GM12878 (cell line): ENCODE measurements at regions of chr10 and their contacts with region 1.

Region 1: GRCh38 chr10:62816331-62817120 is at the start of gene EGR2:
- DNase-seq: peak; percentile 92
- ATAC-seq: peak; percentile 78
- H3K4me3 ChIP-seq: peak within 1 kb of the TSS; percentile 72
- H3K27ac ChIP-seq: peak within 1 kb of the TSS; percentile 72
- H3K4me1 ChIP-seq: peaks cover 19% of the 10 kb centered on the region
- H3K27me3 ChIP-seq: peaks cover 1 to 8% of the 10 kb centered on the region in 2 experiments; a peak in 3 of 4 replicates
- CTCF ChIP-seq: no peak
- EP300 ChIP-seq: peak in 1 of 2 experiments; percentile 56; a peak in 3 of 4 replicates
- POLR2A ChIP-seq: peak; percentile 44
- RAD21 ChIP-seq: no peak
- polyA plus RNA-seq, gene EGR2: 8.3 to 14.0 TPM

Region 2: GRCh38 chr10:62456611-62457101 is 359.9 kb before region 1 on chr10:
- CTCF ChIA-PET with region 1: interaction called, 3 read pairs
- POLR2A ChIA-PET with region 1: no interaction called
- RAD21 ChIA-PET with region 1: interaction called, 17 read pairs
- SMC1A ChIA-PET with region 1: no interaction called
- in situ Hi-C with region 1: no loop called
- intact Hi-C with region 1: no loop called
- DNase-seq: peak; percentile 86
- ATAC-seq: peak; percentile 97
- H3K4me3 ChIP-seq: no peak overlapping the region
- H3K27ac ChIP-seq: no peak overlapping the region
- H3K4me1 ChIP-seq: peaks cover 21% of the 10 kb centered on the region
- H3K27me3 ChIP-seq: peaks cover 0 to 2% of the 10 kb centered on the region in 2 experiments; a peak in 1 of 4 replicates
- CTCF ChIP-seq: no peak
- EP300 ChIP-seq: peak; percentile 90 to 96
- POLR2A ChIP-seq: no peak
- RAD21 ChIP-seq: no peak

Region 3: GRCh38 chr10:62618576-62619412 is 197.7 kb before region 1 on chr10:
- CTCF ChIA-PET with region 1: interaction called, 123 read pairs
- POLR2A ChIA-PET with region 1: interaction called, 5 read pairs
- RAD21 ChIA-PET with region 1: interaction called, 132 read pairs
- SMC1A ChIA-PET with region 1: interaction called, 131 read pairs
- in situ Hi-C with region 1: loop called (anchors 5 kb)
- intact Hi-C with region 1: loop called (anchors 1 kb)
- DNase-seq: no peak
- ATAC-seq: peak; percentile 58
- H3K4me3 ChIP-seq: no peak overlapping the region
- H3K27ac ChIP-seq: 0 out of 2 replicates have a peak overlapping the region, but pooled peaks have one; percentile 2
- H3K4me1 ChIP-seq: peaks cover 30% of the 10 kb centered on the region
- H3K27me3 ChIP-seq: no peaks in the 10 kb centered on the region
- CTCF ChIP-seq: no peak
- EP300 ChIP-seq: no peak
- POLR2A ChIP-seq: no peak
- RAD21 ChIP-seq: no peak

Region 4: DNA sequence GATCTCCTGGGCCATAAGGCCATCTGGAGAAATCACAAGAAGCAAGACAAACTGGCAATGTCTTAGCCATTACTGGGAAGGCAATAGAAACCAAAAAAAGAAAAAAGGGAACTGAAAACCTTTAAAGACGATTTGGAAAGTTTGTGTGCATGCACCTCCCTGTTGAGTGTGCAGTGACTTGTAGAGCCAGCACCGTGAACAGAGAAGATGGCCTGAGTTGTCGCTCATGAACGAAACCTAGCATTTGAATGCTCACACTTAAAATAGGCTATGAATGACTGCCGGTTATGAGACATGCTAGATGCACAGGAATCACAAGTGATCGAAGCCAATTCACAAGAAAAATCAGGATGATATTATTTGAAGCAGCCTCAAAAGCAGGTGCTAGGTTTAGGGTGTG is 163.3 kb before region 1 on chr10:
- CTCF ChIA-PET with region 1: interaction called, 7 read pairs
- POLR2A ChIA-PET with region 1: interaction called, 15 read pairs
- RAD21 ChIA-PET with region 1: interaction called, 47 read pairs
- SMC1A ChIA-PET with region 1: interaction called, 37 read pairs
- in situ Hi-C with region 1: no loop called
- intact Hi-C with region 1: loop called (anchors 1 kb)
- DNase-seq: peak; percentile 97
- ATAC-seq: peak; percentile 85
- H3K4me3 ChIP-seq: no peak overlapping the region
- H3K27ac ChIP-seq: peak overlapping the region; percentile 90
- H3K4me1 ChIP-seq: peaks cover 50% of the 10 kb centered on the region
- H3K27me3 ChIP-seq: no peaks in the 10 kb centered on the region
- CTCF ChIP-seq: no peak
- EP300 ChIP-seq: peak; percentile 99
- POLR2A ChIP-seq: no peak
- RAD21 ChIP-seq: peak; percentile 45; the same call in 1 of the 2 replicates

Region 5: DNA sequence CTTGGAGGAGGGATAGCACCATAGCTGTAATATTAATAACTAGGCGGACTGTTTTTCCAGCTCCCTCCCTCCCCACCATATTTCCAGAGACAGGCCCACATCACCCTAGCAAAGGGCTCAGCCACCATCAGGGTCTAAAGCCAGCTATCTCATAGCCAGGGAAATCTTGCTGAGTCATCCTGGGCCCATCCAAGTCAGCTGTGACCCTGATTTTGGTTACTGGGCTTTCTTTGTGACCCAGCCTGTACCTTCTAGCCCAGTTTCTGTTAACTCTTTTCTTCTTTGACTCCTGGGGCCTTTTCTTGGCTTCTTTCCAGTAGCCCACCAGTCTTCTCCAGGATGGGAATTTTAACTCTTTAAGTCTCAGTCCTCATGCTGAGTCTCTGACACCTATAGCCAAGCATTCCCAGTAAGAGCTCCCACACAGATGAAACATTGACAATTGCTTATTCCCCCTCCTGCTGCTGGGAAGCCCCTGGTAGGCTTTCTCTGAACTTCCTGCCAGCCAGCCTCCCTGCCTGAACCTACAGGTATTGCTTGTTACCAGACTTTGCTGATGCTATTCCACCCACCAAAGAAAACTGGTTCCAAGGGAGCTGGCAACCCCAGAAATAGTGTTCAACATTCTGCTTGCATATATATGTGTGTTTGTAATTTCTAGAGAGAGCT is 46.8 kb before region 1 on chr10:
- CTCF ChIA-PET with region 1: interaction called, 5 read pairs
- POLR2A ChIA-PET with region 1: interaction called, 4 read pairs
- RAD21 ChIA-PET with region 1: interaction called, 5 read pairs
- SMC1A ChIA-PET with region 1: interaction called, 20 read pairs
- in situ Hi-C with region 1: no loop called
- intact Hi-C with region 1: no loop called
- DNase-seq: no peak
- ATAC-seq: peak; percentile 87
- H3K4me3 ChIP-seq: no peak overlapping the region
- H3K27ac ChIP-seq: peak overlapping the region; percentile 56
- H3K4me1 ChIP-seq: peaks cover 31% of the 10 kb centered on the region
- H3K27me3 ChIP-seq: no peaks in the 10 kb centered on the region
- CTCF ChIP-seq: no peak
- EP300 ChIP-seq: no peak
- POLR2A ChIP-seq: no peak
- RAD21 ChIP-seq: no peak

Region 6: DNA sequence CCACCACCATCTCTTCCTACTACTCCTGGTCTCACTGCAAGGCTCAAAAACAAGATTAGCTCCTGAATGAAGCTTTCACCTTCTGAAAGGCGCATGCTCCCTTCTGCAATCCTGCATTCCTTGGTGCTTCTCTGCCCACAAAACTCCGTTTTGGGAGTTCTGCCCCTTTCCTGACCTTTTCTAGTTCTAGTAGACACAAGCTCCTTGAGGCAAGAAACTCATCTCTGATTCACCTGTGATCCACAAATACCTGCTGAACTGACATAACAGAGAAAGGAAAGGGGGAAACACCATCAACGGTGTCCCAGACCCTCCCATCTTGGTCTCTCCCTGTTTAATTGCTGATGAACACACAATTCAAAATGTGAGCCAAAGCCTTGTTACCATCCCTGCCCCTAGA is 63.6 kb after region 1 on chr10:
- CTCF ChIA-PET with region 1: no interaction called
- POLR2A ChIA-PET with region 1: no interaction called
- RAD21 ChIA-PET with region 1: no interaction called
- SMC1A ChIA-PET with region 1: no interaction called
- in situ Hi-C with region 1: no loop called
- intact Hi-C with region 1: no loop called
- DNase-seq: no peak
- ATAC-seq: no peak
- H3K4me3 ChIP-seq: no peak overlapping the region
- H3K27ac ChIP-seq: no peak overlapping the region
- H3K4me1 ChIP-seq: no peaks in the 10 kb centered on the region
- H3K27me3 ChIP-seq: peaks cover 2 to 4% of the 10 kb centered on the region in 2 experiments; a peak in 3 of 4 replicates
- CTCF ChIP-seq: no peak
- EP300 ChIP-seq: no peak
- POLR2A ChIP-seq: no peak
- RAD21 ChIP-seq: no peak

Region 7: GRCh38 chr10:62992145-62992721 is 175.7 kb after region 1 on chr10:
- CTCF ChIA-PET with region 1: no interaction called
- POLR2A ChIA-PET with region 1: interaction called, 4 read pairs
- RAD21 ChIA-PET with region 1: interaction called, 10 read pairs
- SMC1A ChIA-PET with region 1: interaction called, 5 read pairs
- in situ Hi-C with region 1: no loop called
- intact Hi-C with region 1: no loop called
- DNase-seq: peak; percentile 40
- ATAC-seq: peak; percentile 91
- H3K4me3 ChIP-seq: no peak overlapping the region; the same call in 1 of the 2 replicates
- H3K27ac ChIP-seq: peak overlapping the region; percentile 56
- H3K4me1 ChIP-seq: peaks cover 8% of the 10 kb centered on the region
- H3K27me3 ChIP-seq: no peaks in the 10 kb centered on the region
- CTCF ChIP-seq: no peak
- EP300 ChIP-seq: no peak; a peak in 1 of 4 replicates
- POLR2A ChIP-seq: no peak
- RAD21 ChIP-seq: no peak

Region 8: DNA sequence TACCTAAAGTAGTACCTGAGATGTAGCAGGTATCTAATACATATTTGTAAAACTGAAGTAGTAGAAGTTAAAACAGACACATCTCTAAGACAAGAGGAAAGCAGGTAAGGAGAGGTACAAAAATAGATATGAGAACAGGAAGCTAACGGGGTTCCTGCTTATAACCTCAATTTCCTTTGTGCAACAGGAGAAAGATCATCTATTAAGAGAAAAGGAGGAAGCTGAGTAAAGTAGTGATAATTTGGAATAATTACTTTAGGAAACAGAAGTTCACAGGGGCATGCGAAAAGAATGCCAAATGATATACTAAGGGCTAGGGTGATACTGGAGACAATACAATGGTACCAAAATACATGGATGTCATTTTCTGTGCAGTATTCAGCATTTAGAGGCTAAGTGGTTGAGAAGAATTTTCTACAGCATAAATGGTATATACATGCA is 425.3 kb after region 1 on chr10:
- CTCF ChIA-PET with region 1: no interaction called
- POLR2A ChIA-PET with region 1: no interaction called
- RAD21 ChIA-PET with region 1: no interaction called
- SMC1A ChIA-PET with region 1: no interaction called
- in situ Hi-C with region 1: no loop called
- intact Hi-C with region 1: no loop called
- DNase-seq: no peak
- ATAC-seq: peak; percentile 37
- H3K4me3 ChIP-seq: peak overlapping the region; percentile 21; the same call in 1 of the 2 replicates
- H3K27ac ChIP-seq: no peak overlapping the region
- H3K4me1 ChIP-seq: peaks cover 25% of the 10 kb centered on the region
- H3K27me3 ChIP-seq: no peaks in the 10 kb centered on the region
- CTCF ChIP-seq: no peak
- EP300 ChIP-seq: no peak
- POLR2A ChIP-seq: no peak
- RAD21 ChIP-seq: no peak